ENCODE measurements at regions of chr19 and their contacts with region 1.

Region 1: GRCh38 chr19:9834726-9835506 is at the start of gene PIN1:
- DNase-seq: peak; percentile 99
- ATAC-seq: peak; percentile 95 to 99 (median 96)
- H3K4me3 ChIP-seq: peak within 1 kb of the TSS; percentile 59
- H3K4me3 Mint-ChIP-seq: peak within 1 kb of the TSS; percentile 85
- H3K27ac ChIP-seq: peak within 1 kb of the TSS; percentile 70
- H3K27ac Mint-ChIP-seq: peak within 1 kb of the TSS; percentile 85 to 89
- H3K4me1 ChIP-seq: peaks cover 17% of the 10 kb centered on the region
- H3K4me1 Mint-ChIP-seq: peaks cover 12 to 22% of the 10 kb centered on the region in 2 donors
- H3K27me3 ChIP-seq: no peaks in the 10 kb centered on the region
- H3K27me3 Mint-ChIP-seq: no peaks in the 10 kb centered on the region
- CTCF ChIP-seq: peak; percentile 21
- total RNA-seq, gene PIN1: 68.3 to 82.6 (median 74.8) TPM

Region 2: DNA sequence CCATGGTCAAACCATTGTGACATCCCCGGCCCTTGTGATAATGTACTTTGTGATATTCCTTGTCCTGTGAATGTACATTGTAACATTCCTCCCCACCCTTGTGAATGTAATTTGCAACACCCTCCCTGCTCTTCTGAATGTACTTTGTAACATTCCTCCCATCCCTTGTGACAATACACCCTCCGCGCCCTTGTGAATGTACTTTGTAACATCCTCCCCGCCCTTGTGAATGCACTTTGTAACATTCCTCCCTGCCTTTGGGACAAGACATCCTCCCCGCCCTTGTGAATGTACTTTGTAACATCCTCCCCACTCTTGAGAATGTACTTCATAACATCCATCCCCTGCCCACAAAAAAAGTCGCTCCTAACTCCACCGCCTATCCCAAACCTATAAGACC is 83.5 kb before region 1 on chr19:
- intact Hi-C with region 1: no loop called
- DNase-seq: no peak
- ATAC-seq: no peak
- H3K4me3 ChIP-seq: no peak overlapping the region
- H3K4me3 Mint-ChIP-seq: no peak overlapping the region
- H3K27ac ChIP-seq: no peak overlapping the region
- H3K27ac Mint-ChIP-seq: no peak overlapping the region
- H3K4me1 ChIP-seq: no peaks in the 10 kb centered on the region
- H3K4me1 Mint-ChIP-seq: no peaks in the 10 kb centered on the region
- H3K27me3 ChIP-seq: no peaks in the 10 kb centered on the region
- H3K27me3 Mint-ChIP-seq: no peaks in the 10 kb centered on the region
- CTCF ChIP-seq: no peak

Region 3: GRCh38 chr19:9785367-9786331 is 49.3 kb before region 1 on chr19:
- intact Hi-C with region 1: loop called (anchors 5 kb)
- DNase-seq: peak; percentile 86 to 98
- ATAC-seq: peak; percentile 81 to 93 (median 81)
- H3K4me3 ChIP-seq: peak overlapping the region; percentile 86
- H3K4me3 Mint-ChIP-seq: peak overlapping the region; percentile 93
- H3K27ac ChIP-seq: peak overlapping the region; percentile 98
- H3K27ac Mint-ChIP-seq: peak overlapping the region; percentile 93 to 95
- H3K4me1 ChIP-seq: peaks cover 14% of the 10 kb centered on the region
- H3K4me1 Mint-ChIP-seq: peaks cover 7 to 36% of the 10 kb centered on the region in 2 donors
- H3K27me3 ChIP-seq: no peaks in the 10 kb centered on the region
- H3K27me3 Mint-ChIP-seq: no peaks in the 10 kb centered on the region
- CTCF ChIP-seq: no peak